ENCODE measurements at regions of chr5 and their contacts with region 1.

Region 1: GRCh38 chr5:5638211-5638610 is 215.7 kb downstream of the ICE1 start:
- DNase-seq: no peak
- H3K4me3 ChIP-seq: no peak overlapping the region
- H3K27ac ChIP-seq: no peak overlapping the region
- H3K4me1 ChIP-seq: no peaks in the 10 kb centered on the region
- H3K27me3 ChIP-seq: peaks cover 89% of the 10 kb centered on the region
- CTCF ChIP-seq: no peak

Region 2: GRCh38 chr5:5609935-5610334 is 28.3 kb before region 1 on chr5:
- CTCF ChIA-PET with region 1: no interaction called
- POLR2A ChIA-PET with region 1: no interaction called
- intact Hi-C with region 1: loop called (anchors 2 kb)
- DNase-seq: no peak
- H3K4me3 ChIP-seq: no peak overlapping the region
- H3K27ac ChIP-seq: no peak overlapping the region
- H3K4me1 ChIP-seq: no peaks in the 10 kb centered on the region
- H3K27me3 ChIP-seq: peaks cover 33% of the 10 kb centered on the region
- CTCF ChIP-seq: no peak

Region 3: GRCh38 chr5:5665225-5666075 is 27.2 kb after region 1 on chr5:
- CTCF ChIA-PET with region 1: no interaction called
- POLR2A ChIA-PET with region 1: no interaction called
- intact Hi-C with region 1: no loop called
- DNase-seq: peak in 1 of 2 experiments; percentile 86
- H3K4me3 ChIP-seq: peak overlapping the region; percentile 25; the same call in 1 of the 2 replicates
- H3K27ac ChIP-seq: peak overlapping the region; percentile 48
- H3K4me1 ChIP-seq: peaks cover 30% of the 10 kb centered on the region
- H3K27me3 ChIP-seq: peaks cover 13% of the 10 kb centered on the region
- CTCF ChIP-seq: no peak

Measured in PC-9 (cell line).